MCF 10A (cell line): ENCODE measurements at regions of chr1 and their contacts with region 1.

Region 1: DNA sequence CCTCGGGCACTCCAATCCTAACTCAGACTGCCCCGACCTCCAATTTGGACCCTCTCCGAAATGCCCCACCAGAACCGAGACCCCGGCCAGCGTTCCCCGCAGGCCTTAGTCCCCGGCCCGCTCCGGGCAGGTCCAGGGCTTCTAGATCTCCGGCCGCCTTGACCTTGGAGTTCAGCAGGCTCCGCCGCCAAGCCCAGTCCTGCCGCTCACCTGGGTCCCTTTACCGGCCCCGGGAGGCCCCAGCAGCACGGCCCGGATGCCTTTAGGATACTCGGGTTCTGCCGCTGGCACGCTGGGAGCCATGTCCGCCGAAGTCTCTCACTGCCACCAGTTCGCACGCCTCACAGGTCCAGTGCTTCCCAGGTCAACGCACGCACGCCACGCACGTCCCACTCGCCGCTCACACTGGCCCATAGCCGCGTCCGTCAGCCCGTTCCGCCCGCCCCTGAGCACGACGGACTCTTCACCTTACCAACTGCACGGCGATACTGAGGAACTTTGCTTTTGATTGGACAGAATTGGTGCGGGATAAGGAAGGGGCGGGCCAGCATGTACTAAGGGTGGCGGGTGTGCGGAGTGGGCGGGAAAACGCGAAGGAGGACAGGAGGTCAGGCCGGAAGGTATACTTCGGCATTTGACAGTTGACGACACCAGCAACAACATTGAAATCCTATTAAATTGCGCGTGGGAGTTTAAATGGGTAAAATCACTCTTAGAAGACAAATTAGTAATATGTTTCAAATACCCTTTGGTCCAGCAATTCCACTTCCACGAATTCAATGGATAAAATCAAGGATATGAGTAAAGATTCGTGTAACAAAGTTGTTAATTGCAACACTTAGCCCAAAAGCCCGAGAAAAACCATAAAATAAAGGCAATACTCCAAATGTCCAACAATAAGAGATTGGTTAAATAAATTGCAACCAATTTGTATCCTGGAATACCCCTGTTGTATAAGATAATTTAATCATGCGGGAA is at the start of gene AK2:
- DNase-seq: peak; percentile 99
- H3K4me3 Mint-ChIP-seq: peak within 1 kb of the TSS; percentile 98
- H3K27ac Mint-ChIP-seq: peak within 1 kb of the TSS; percentile 95
- H3K4me1 Mint-ChIP-seq: peaks cover 26% of the 10 kb centered on the region
- H3K27me3 Mint-ChIP-seq: no peaks in the 10 kb centered on the region
- CTCF ChIP-seq: no peak
- total RNA-seq, gene AK2: 286 and 390 TPM in 2 replicates

Region 2: DNA sequence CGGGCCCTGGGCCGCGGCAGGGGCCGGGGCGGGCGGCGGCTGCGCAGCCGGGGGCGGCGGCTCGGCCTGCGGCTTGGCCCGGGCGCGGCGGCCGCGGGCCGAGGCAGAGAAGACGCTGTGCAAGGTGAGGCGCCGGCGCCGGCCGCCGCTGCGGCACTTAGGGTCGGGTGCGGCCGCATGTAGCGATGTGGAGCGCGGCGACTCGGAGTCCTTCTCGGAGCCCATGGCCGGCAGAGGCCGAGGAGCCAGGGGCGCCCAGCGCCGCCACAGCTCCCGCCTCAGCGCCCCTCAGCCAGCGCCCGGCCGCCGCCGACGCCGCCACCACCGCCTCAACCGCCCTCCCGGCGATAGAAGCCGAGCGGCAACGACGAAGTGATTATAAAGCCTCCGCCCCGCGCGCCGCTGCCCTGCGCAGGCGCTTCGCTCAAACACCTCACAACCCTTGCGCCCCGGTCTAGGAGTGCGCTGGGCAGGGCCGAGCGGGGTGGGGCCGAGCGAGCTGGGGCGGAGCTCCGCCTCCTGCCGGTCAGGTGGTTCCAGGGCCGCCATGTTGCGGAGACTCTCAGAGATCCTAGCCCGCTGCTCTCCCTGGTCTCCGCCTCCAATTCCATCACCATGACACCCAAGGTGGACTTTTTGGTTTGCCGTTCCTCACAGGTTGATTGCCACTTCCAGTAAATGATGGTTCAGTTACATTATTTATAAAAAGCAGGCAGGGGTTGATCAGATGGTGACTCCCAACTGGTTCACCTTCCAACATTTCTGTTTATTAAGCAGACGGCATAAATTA is 72.2 kb before region 1 on chr1 and contains the start of gene RNF19B:
- CTCF ChIA-PET with region 1: no interaction called
- POLR2A ChIA-PET with region 1: interaction called, 13 read pairs
- intact Hi-C with region 1: no loop called
- DNase-seq: peak; percentile 95
- H3K4me3 Mint-ChIP-seq: peak within 1 kb of the TSS; percentile 84
- H3K27ac Mint-ChIP-seq: peak within 1 kb of the TSS; percentile 69
- H3K4me1 Mint-ChIP-seq: peaks cover 29% of the 10 kb centered on the region
- H3K27me3 Mint-ChIP-seq: no peaks in the 10 kb centered on the region
- CTCF ChIP-seq: no peak
- total RNA-seq, gene RNF19B: 38.0 and 41.3 TPM in 2 replicates

Region 3: GRCh38 chr1:33025181-33025571 is 11.6 kb before region 1 on chr1:
- CTCF ChIA-PET with region 1: interaction called, 4 read pairs
- POLR2A ChIA-PET with region 1: interaction called, 12 read pairs
- intact Hi-C with region 1: no loop called
- DNase-seq: no peak
- H3K4me3 Mint-ChIP-seq: no peak overlapping the region
- H3K27ac Mint-ChIP-seq: no peak overlapping the region
- H3K4me1 Mint-ChIP-seq: peaks cover 9% of the 10 kb centered on the region
- H3K27me3 Mint-ChIP-seq: no peaks in the 10 kb centered on the region
- CTCF ChIP-seq: no peak

Region 4: DNA sequence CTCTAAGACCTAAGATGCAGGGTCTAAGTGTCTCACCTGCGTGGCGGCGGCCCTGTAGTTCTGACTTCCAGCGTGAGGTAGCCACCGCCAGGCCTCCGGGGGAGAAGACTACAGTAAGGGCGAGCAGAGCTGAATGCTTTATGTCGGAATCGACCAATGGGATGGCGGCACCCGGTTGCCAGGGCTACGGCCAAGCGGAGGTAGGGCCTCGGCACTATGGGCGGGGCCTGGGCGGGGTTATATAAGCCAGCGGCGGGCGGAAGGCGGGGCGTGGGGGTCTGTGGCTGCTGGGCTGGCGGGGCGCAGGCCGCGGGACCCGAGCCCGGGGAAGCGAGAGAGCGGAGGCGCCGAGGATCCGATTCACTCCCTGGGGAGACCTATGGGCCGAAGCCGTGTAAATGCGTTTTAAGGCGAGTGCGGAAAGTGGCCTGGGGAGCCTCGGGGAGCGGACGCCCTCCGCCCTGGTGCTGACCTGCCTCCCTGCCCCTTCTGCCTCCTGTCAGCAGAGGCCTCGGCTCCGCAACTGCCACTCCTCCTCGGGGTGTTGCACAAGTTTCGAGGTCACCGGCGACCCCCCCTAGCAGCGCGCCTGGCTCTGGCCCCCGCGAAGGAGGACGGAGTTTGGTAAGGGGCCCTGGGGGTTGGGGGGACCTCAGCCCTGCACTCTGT is 44.2 kb after region 1 on chr1 and contains the start of gene AZIN2:
- CTCF ChIA-PET with region 1: interaction called, 3 read pairs
- POLR2A ChIA-PET with region 1: interaction called, 4 read pairs
- intact Hi-C with region 1: loop called (anchors 5 kb)
- DNase-seq: peak; percentile 94
- H3K4me3 Mint-ChIP-seq: peak within 1 kb of the TSS; percentile 75
- H3K27ac Mint-ChIP-seq: peak within 1 kb of the TSS; percentile 59
- H3K4me1 Mint-ChIP-seq: peaks cover 20% of the 10 kb centered on the region
- H3K27me3 Mint-ChIP-seq: no peaks in the 10 kb centered on the region
- CTCF ChIP-seq: no peak
- total RNA-seq, gene AZIN2: 1.6 and 4.3 TPM in 2 replicates